ENCODE measurements at regions of chr19 and their contacts with region 1.

Region 1: GRCh38 chr19:18588611-18589379 is at the start of gene REX1BD:
- DNase-seq: peak; percentile 91
- ATAC-seq: peak; percentile 82
- H3K4me3 Mint-ChIP-seq: peak within 1 kb of the TSS; percentile 77
- H3K27ac Mint-ChIP-seq: peak within 1 kb of the TSS; percentile 94
- H3K4me1 Mint-ChIP-seq: peaks cover 47% of the 10 kb centered on the region
- H3K27me3 Mint-ChIP-seq: no peaks in the 10 kb centered on the region
- total RNA-seq, gene REX1BD: 88.9 to 102 TPM

Region 2: DNA sequence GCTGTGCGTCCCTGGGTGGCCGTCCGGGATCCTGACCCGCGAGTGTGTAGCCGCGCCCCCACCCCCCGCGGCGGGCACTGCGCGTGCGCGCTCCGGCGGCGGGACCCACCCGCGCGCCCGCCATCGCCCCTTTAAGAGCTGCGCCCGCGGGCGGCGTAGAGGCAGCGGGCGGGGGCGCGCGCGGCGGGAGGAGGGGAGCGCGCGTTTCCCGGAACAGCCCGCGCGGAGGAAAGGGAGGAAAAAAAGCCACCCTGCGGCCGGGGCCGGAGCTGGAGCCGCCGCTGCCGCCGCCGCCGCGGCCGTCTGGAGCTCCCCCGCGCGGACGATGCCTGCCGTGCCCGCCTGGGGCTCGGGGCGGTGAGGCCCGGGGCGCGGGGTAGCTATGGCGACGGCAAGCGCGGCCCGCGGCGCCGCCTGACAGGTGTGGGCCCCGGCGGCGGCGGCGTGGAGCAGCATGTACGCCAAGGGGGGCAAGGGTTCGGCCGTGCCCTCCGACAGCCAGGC is 169.5 kb before region 1 on chr19 and contains the start of gene SSBP4:
- CTCF ChIA-PET with region 1: interaction called, 11 read pairs
- DNase-seq: peak; percentile 79
- ATAC-seq: peak; percentile 31
- H3K4me3 Mint-ChIP-seq: peak within 1 kb of the TSS; percentile 97
- H3K27ac Mint-ChIP-seq: peak within 1 kb of the TSS; percentile 93
- H3K4me1 Mint-ChIP-seq: peaks cover 81% of the 10 kb centered on the region
- H3K27me3 Mint-ChIP-seq: peaks cover 3% of the 10 kb centered on the region
- total RNA-seq, gene SSBP4: 197 to 247 TPM

Region 3: DNA sequence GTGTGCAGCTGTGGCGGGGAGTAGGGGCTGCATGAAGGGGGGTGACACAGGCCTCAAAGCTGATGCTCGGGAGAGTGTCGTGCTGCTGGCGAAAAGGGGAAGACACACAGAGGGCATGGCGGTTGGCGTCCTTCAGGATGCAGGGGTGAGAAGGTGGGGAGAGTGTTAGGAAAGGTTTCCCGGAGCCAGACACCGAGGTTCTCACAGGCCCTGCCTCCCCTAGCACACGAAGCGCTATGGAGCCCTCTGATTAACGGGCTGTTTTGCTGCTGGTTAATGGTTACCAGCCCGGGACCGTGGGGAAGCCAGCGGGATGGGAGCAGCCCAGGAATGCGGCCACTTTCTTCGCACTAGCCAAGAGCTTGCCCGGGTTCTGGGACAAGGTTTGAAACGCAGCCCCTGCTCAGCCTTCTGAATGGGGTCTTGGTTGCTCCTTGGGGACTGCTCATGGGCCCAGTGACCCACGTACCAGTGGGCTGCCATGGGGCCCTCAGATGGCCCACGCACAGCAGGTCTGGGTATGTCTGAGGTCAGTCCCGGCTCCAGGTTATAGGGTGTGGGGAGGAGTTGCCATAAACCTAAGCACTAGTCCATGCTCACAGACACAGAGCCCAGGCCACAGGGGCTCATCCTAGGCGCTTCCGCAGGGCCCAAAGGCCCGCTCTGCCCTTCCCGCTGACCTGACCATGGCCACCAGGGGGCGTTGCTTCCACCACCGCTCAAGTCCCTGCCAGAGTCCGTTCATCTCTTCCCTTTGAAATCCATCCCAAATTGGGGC is 119.5 kb before region 1 on chr19:
- CTCF ChIA-PET with region 1: interaction called, 24 read pairs
- DNase-seq: peak; percentile 63
- ATAC-seq: peak; percentile 57
- H3K4me3 Mint-ChIP-seq: no peak overlapping the region
- H3K27ac Mint-ChIP-seq: no peak overlapping the region
- H3K4me1 Mint-ChIP-seq: peaks cover 25% of the 10 kb centered on the region
- H3K27me3 Mint-ChIP-seq: no peaks in the 10 kb centered on the region

Region 4: GRCh38 chr19:18496167-18496979 is 92.4 kb before region 1 on chr19:
- CTCF ChIA-PET with region 1: interaction called, 18 read pairs
- DNase-seq: peak; percentile 83
- ATAC-seq: peak; percentile 83
- H3K4me3 Mint-ChIP-seq: peak overlapping the region; percentile 57
- H3K27ac Mint-ChIP-seq: peak overlapping the region; percentile 95
- H3K4me1 Mint-ChIP-seq: peaks cover 81% of the 10 kb centered on the region
- H3K27me3 Mint-ChIP-seq: no peaks in the 10 kb centered on the region

Region 5: GRCh38 chr19:18521885-18522624 is 66.7 kb before region 1 on chr19 and contains the start of gene ELL:
- CTCF ChIA-PET with region 1: interaction called, 67 read pairs
- DNase-seq: peak; percentile 100
- ATAC-seq: peak; percentile 91
- H3K4me3 Mint-ChIP-seq: peak within 1 kb of the TSS; percentile 92
- H3K27ac Mint-ChIP-seq: peak within 1 kb of the TSS; percentile 93
- H3K4me1 Mint-ChIP-seq: peaks cover 22% of the 10 kb centered on the region
- H3K27me3 Mint-ChIP-seq: no peaks in the 10 kb centered on the region
- total RNA-seq, gene ELL: 22.9 to 33.7 TPM

Region 6: DNA sequence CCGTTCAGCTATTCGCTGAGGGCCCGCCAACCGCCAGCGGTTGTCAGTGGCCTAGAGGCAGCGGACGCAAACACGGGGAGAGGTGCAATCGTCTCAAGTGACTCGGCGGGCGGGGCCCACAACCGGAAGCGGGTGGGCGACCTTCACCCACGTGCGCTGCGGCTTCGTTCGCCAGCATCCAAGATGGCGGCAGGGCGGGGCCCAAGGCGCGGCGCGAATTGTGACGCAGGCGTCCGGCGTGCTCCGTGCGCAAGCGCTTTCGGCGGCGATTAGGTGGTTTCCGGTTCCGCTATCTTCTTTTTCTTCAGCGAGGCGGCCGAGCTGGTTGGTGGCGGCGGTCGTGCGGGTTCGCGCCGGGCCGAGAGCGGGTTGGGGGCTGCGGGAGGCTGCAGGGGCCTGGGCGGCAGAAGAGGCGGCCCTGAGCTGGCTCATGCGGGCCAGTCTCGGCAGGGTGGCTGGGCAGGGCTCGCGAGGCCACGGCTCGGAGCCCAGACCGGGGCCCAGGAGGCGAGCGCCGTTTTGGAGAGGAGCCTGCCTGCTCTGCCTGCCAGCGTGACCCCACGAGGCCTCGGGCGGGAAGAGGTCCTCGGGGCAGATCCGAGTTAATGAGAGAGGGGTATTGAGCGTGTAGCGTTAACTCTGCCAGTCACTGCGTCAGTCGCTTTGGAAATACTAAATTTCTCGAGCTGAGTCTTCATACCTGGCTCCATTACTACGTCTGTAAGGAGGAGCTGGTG is 17.1 kb before region 1 on chr19 and contains the start of gene UBA52:
- CTCF ChIA-PET with region 1: interaction called, 48 read pairs
- DNase-seq: peak; percentile 99
- ATAC-seq: peak; percentile 93
- H3K4me3 Mint-ChIP-seq: peak within 1 kb of the TSS; percentile 85
- H3K27ac Mint-ChIP-seq: peak within 1 kb of the TSS; percentile 91
- H3K4me1 Mint-ChIP-seq: peaks cover 34% of the 10 kb centered on the region
- H3K27me3 Mint-ChIP-seq: no peaks in the 10 kb centered on the region
- total RNA-seq, gene UBA52: 1,256 to 1,325 TPM

Region 7: DNA sequence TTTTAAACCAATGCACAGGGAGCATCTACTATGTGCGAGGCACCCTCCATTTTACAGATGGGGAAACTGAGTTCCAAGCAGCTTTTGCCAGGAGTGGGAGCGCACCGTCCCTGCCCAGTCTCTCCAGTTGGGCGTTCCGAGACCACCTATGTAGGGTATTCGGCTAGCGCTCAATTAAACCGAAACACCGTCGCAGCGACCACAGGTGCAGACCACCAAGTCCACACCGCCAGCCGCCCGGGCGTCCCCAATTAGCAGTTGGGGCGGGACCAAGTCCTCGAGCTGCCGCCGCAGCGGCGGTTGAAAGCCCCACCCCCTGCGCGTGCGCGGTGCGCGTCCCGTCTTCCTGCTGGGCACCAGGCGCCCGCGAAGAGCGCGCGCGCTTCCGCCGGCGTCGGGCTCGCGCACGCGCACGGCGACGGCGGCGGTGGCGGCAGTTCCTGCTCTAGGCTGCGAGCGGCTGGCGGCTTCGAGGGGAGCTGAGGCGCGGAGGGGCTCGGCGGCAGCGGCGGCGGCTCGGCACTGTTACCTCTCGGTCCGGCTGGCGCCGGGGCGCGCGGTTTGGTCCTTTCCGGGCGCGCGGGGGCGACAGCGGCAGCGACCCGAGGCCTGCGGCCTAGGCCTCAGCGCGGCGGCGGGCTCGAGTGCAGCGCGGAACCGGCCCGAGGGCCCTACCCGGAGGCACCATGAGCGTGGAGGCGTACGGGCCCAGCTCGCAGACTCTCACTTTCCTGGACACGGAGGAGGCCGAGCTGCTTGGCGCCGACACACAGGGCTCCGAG is 242.9 kb after region 1 on chr19 and contains the start of gene UPF1:
- CTCF ChIA-PET with region 1: interaction called, 10 read pairs
- DNase-seq: peak; percentile 97
- ATAC-seq: peak; percentile 88
- H3K4me3 Mint-ChIP-seq: peak within 1 kb of the TSS; percentile 95
- H3K27ac Mint-ChIP-seq: peak within 1 kb of the TSS; percentile 86
- H3K4me1 Mint-ChIP-seq: peaks cover 38% of the 10 kb centered on the region
- H3K27me3 Mint-ChIP-seq: peaks cover 13% of the 10 kb centered on the region
- total RNA-seq, gene UPF1: 98.4 to 98.7 TPM

Measured in activated CD8-positive, alpha-beta memory T cell treated with anti-CD3 and anti-CD28 coated beads, Interleukin-2, amount 10 ng/mL, durations not matched to agents 7 days and 5 days (primary cell).